ENCODE measurements at regions of chr5 and their contacts with region 1.

Region 1: DNA sequence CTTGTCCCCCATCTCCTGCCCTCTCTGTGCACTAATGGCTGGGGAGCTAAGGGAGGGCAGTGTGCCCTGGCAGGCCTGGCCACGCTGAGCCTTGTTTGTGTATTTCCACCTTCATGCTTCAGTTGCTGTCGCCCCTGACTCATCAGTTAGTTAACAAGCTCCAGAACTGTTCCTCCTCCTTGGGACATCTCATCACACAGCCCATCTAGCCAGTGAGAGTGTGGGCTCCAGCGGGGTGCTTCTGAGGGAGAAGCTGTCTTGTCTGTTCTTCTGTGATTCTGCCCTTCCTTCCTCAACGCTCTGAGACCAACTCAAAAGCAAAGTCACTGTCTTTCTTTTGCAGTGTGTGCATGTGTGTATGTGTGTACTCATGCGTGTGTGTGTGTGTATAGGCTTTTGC is 58.3 kb upstream of the CPEB4 start:
- DNase-seq: no peak
- ATAC-seq: peak; percentile 73
- H3K4me3 ChIP-seq: no peak overlapping the region
- H3K27ac ChIP-seq: peak overlapping the region; percentile 58
- H3K4me1 ChIP-seq: peaks cover 36% of the 10 kb centered on the region
- H3K27me3 ChIP-seq: no peaks in the 10 kb centered on the region
- CTCF ChIP-seq: no peak
- EP300 ChIP-seq: no peak
- POLR2A ChIP-seq: no peak
- RAD21 ChIP-seq: 0 out of 2 replicates have a peak, but pooled peaks have one; percentile 2

Region 2: DNA sequence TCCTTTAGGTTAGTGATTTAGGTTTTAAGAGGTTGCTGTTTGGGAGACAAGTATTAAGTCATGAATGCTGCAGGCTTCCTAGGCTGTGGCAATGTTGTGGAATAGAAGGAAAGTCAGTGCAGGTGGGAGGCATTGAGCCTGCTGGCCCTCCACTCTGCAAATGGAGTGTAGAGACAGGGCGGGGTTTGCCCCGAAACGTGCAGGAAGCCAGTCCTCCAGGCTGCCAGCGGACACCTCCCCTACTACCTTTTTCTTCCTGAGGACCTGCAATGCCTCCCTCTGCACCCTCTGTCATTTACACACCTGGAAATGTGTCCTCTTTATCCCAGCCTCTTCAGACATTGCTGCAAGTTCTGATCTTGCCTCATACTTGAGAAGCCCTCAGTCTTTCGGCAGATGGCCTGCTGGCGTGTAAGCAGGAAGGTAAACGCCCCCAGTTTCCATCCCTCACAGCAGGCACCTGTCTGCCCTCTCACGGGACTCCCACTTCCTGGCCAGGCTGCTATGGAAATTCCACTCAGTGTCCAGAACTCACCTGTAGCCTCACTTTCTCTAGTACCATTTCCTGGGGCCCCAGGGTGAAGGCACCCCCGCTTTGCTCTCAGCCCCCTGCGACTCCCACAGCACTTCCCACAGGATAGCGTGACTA is 131.8 kb before region 1 on chr5:
- CTCF ChIA-PET with region 1: no interaction called
- POLR2A ChIA-PET with region 1: no interaction called
- RAD21 ChIA-PET with region 1: no interaction called
- SMC1A ChIA-PET with region 1: no interaction called
- in situ Hi-C with region 1: no loop called
- intact Hi-C with region 1: no loop called
- DNase-seq: no peak
- ATAC-seq: peak; percentile 55
- H3K4me3 ChIP-seq: no peak overlapping the region
- H3K27ac ChIP-seq: peak overlapping the region; percentile 50; the same call in 1 of the 2 replicates
- H3K4me1 ChIP-seq: peaks cover 24% of the 10 kb centered on the region
- H3K27me3 ChIP-seq: no peaks in the 10 kb centered on the region
- CTCF ChIP-seq: no peak
- EP300 ChIP-seq: peak in 1 of 2 experiments; percentile 57; a peak in 1 of 4 replicates
- POLR2A ChIP-seq: no peak
- RAD21 ChIP-seq: no peak

Region 3: DNA sequence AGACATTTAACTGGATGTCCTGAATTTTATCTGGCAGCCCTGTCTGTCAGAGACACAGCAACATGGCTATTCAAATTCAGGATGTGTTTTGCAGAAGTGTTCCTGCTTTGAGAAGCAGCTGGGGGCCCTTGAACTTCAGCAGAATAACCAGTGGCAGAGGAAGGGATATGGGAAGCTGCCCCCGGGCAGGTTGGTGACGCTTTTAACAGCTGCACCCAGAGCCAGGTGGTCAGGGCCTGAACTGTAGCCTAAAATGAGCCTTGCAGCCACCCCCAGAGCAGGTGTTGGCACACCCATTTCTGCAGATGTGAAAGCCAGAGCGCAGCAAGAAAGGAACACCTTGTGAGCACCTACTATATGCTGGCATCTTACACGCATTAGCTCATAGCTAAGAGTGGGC is 84.7 kb before region 1 on chr5:
- CTCF ChIA-PET with region 1: interaction called, 4 read pairs
- POLR2A ChIA-PET with region 1: interaction called, 6 read pairs
- RAD21 ChIA-PET with region 1: interaction called, 5 read pairs
- SMC1A ChIA-PET with region 1: interaction called, 20 read pairs
- in situ Hi-C with region 1: no loop called
- intact Hi-C with region 1: no loop called
- DNase-seq: peak; percentile 47
- ATAC-seq: peak; percentile 64
- H3K4me3 ChIP-seq: no peak overlapping the region
- H3K27ac ChIP-seq: peak overlapping the region; percentile 95
- H3K4me1 ChIP-seq: peaks cover 54% of the 10 kb centered on the region
- H3K27me3 ChIP-seq: no peaks in the 10 kb centered on the region
- CTCF ChIP-seq: no peak
- EP300 ChIP-seq: no peak; a peak in 1 of 4 replicates
- POLR2A ChIP-seq: no peak
- RAD21 ChIP-seq: 0 out of 2 replicates have a peak, but pooled peaks have one; percentile 0

Region 4: GRCh38 chr5:173840111-173840983 is 10.5 kb after region 1 on chr5:
- CTCF ChIA-PET with region 1: interaction called, 6 read pairs
- POLR2A ChIA-PET with region 1: interaction called, 6 read pairs
- RAD21 ChIA-PET with region 1: interaction called, 3 read pairs
- SMC1A ChIA-PET with region 1: interaction called, 97 read pairs
- in situ Hi-C with region 1: no loop called
- intact Hi-C with region 1: no loop called
- DNase-seq: no peak
- ATAC-seq: no peak
- H3K4me3 ChIP-seq: no peak overlapping the region
- H3K27ac ChIP-seq: no peak overlapping the region
- H3K4me1 ChIP-seq: no peaks in the 10 kb centered on the region
- H3K27me3 ChIP-seq: no peaks in the 10 kb centered on the region
- CTCF ChIP-seq: no peak
- EP300 ChIP-seq: no peak
- POLR2A ChIP-seq: no peak
- RAD21 ChIP-seq: no peak

Region 5: GRCh38 chr5:174799121-174799520 is 969.3 kb after region 1 on chr5:
- CTCF ChIA-PET with region 1: no interaction called
- POLR2A ChIA-PET with region 1: no interaction called
- RAD21 ChIA-PET with region 1: no interaction called
- SMC1A ChIA-PET with region 1: no interaction called
- in situ Hi-C with region 1: no loop called
- intact Hi-C with region 1: no loop called
- DNase-seq: no peak
- ATAC-seq: no peak
- H3K4me3 ChIP-seq: no peak overlapping the region
- H3K27ac ChIP-seq: no peak overlapping the region
- H3K4me1 ChIP-seq: no peaks in the 10 kb centered on the region
- H3K27me3 ChIP-seq: no peaks in the 10 kb centered on the region; a peak in 1 of 4 replicates
- CTCF ChIP-seq: no peak
- EP300 ChIP-seq: no peak
- POLR2A ChIP-seq: no peak
- RAD21 ChIP-seq: no peak

Measured in GM12878 (cell line).